ENCODE measurements at regions of chr10 and their contacts with region 1.

Region 1: GRCh38 chr10:21078410-21079329 is 181.6 kb upstream of the NEBL start:
- DNase-seq: peak; percentile 87
- H3K4me3 ChIP-seq: no peak overlapping the region
- H3K27ac ChIP-seq: no peak overlapping the region
- H3K4me1 ChIP-seq: no peaks in the 10 kb centered on the region
- H3K27me3 ChIP-seq: peaks cover 19% of the 10 kb centered on the region
- CTCF ChIP-seq: peak; percentile 83

Region 2: GRCh38 chr10:20748551-20748950 is 330.1 kb before region 1 on chr10:
- CTCF ChIA-PET with region 1: no interaction called
- POLR2A ChIA-PET with region 1: no interaction called
- intact Hi-C with region 1: no loop called
- DNase-seq: no peak
- H3K4me3 ChIP-seq: no peak overlapping the region
- H3K27ac ChIP-seq: no peak overlapping the region
- H3K4me1 ChIP-seq: peaks cover 11% of the 10 kb centered on the region
- H3K27me3 ChIP-seq: no peaks in the 10 kb centered on the region
- CTCF ChIP-seq: no peak

Region 3: DNA sequence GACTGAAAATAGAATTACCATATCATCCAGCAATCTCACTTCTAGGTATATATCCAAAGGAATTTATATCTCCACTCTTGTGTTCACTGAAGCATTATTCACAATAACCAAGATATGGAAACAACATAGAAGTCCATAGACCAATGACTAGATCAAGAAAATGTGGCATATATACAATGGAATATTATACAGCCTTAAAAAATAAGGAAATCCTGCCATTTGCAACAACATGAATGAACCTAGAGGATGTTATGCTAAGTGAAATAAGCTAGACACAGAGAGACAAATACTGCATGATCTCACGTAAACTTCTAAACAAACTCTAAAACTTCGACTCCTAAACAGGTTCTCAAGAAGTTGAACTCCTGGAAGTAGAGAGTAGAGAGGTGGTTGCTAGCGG is 192.3 kb after region 1 on chr10:
- CTCF ChIA-PET with region 1: interaction called, 6 read pairs
- POLR2A ChIA-PET with region 1: no interaction called
- intact Hi-C with region 1: loop called (anchors 1 kb)
- DNase-seq: no peak
- H3K4me3 ChIP-seq: no peak overlapping the region
- H3K27ac ChIP-seq: no peak overlapping the region
- H3K4me1 ChIP-seq: no peaks in the 10 kb centered on the region
- H3K27me3 ChIP-seq: no peaks in the 10 kb centered on the region
- CTCF ChIP-seq: no peak

Region 4: GRCh38 chr10:21732067-21732772 is 653.5 kb after region 1 on chr10:
- CTCF ChIA-PET with region 1: no interaction called
- POLR2A ChIA-PET with region 1: no interaction called
- intact Hi-C with region 1: loop called (anchors 10 kb)
- DNase-seq: peak; percentile 88
- H3K4me3 ChIP-seq: no peak overlapping the region
- H3K27ac ChIP-seq: no peak overlapping the region
- H3K4me1 ChIP-seq: peaks cover 73% of the 10 kb centered on the region
- H3K27me3 ChIP-seq: no peaks in the 10 kb centered on the region
- CTCF ChIP-seq: peak; percentile 94

Region 5: GRCh38 chr10:21943633-21944265 is 865.1 kb after region 1 on chr10:
- CTCF ChIA-PET with region 1: no interaction called
- POLR2A ChIA-PET with region 1: no interaction called
- intact Hi-C with region 1: loop called (anchors 10 kb)
- DNase-seq: no peak
- H3K4me3 ChIP-seq: no peak overlapping the region
- H3K27ac ChIP-seq: no peak overlapping the region
- H3K4me1 ChIP-seq: peaks cover 7% of the 10 kb centered on the region
- H3K27me3 ChIP-seq: no peaks in the 10 kb centered on the region
- CTCF ChIP-seq: no peak